ENCODE measurements at regions of chrX and their contacts with region 1.

Region 1: GRCh38 chrX:109890895-109891502 is 111.9 kb upstream of the TMEM164 start:
- DNase-seq: peak; percentile 70
- ATAC-seq: peak; percentile 96
- H3K4me3 Mint-ChIP-seq: no peak overlapping the region
- H3K27ac Mint-ChIP-seq: no peak overlapping the region
- H3K4me1 Mint-ChIP-seq: no peaks in the 10 kb centered on the region
- H3K27me3 Mint-ChIP-seq: peaks cover 2% of the 10 kb centered on the region; the same call in 1 of the 2 replicates
- CTCF ChIP-seq: peak; percentile 58

Region 2: DNA sequence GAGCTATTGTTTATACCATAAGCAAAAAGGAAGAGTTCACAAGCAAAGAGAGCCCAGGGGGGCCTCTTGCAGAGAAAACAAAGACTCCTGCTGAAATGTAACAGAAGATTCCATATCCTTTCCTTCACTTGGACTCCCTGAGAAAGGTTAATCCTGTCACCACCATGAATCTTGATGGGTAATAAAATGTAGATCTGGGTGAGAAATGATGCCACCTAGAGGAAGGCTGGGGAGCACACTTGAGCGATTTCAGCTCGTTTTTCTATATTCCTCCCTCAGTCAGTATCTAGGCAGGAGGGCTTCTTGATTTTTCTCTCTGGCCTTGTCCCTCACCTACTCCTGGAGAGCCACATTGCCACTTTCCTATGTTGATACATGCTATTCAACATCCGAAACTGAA is 255.8 kb before region 1 on chrX:
- CTCF ChIA-PET with region 1: interaction called, 19 read pairs
- POLR2A ChIA-PET with region 1: no interaction called
- DNase-seq: peak; percentile 9
- ATAC-seq: peak; percentile 70
- H3K4me3 Mint-ChIP-seq: no peak overlapping the region
- H3K27ac Mint-ChIP-seq: no peak overlapping the region
- H3K4me1 Mint-ChIP-seq: no peaks in the 10 kb centered on the region; the same call in 1 of the 2 replicates
- H3K27me3 Mint-ChIP-seq: no peaks in the 10 kb centered on the region
- CTCF ChIP-seq: no peak

Region 3: GRCh38 chrX:109709129-109709631 is 181.8 kb before region 1 on chrX:
- CTCF ChIA-PET with region 1: interaction called, 53 read pairs
- POLR2A ChIA-PET with region 1: no interaction called
- DNase-seq: no peak
- ATAC-seq: no peak
- H3K4me3 Mint-ChIP-seq: no peak overlapping the region
- H3K27ac Mint-ChIP-seq: peak overlapping the region; percentile 36; the same call in 1 of the 2 replicates
- H3K4me1 Mint-ChIP-seq: peaks cover 16% of the 10 kb centered on the region
- H3K27me3 Mint-ChIP-seq: no peaks in the 10 kb centered on the region
- CTCF ChIP-seq: no peak

Region 4: DNA sequence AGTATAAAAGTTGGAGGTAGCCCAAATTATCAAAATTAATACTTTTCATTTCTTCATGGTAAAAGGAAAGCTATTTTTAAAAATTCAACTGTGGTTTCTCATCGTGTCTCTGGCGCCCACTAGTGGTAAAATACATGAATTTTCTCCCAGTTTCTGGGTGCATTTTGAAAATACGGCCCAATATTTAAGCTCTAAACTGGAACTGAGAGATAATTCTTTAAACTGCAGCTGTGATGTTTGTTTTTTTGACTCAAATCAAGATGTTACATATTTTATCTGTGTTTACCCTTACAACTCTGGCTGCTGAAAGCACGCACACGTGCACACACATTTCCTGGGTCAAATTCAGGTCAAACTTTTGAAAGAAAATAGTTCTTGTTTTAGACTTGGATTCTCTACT is 34.0 kb before region 1 on chrX:
- CTCF ChIA-PET with region 1: interaction called, 15 read pairs
- POLR2A ChIA-PET with region 1: no interaction called
- DNase-seq: no peak
- ATAC-seq: no peak
- H3K4me3 Mint-ChIP-seq: no peak overlapping the region
- H3K27ac Mint-ChIP-seq: no peak overlapping the region
- H3K4me1 Mint-ChIP-seq: peaks cover 18% of the 10 kb centered on the region
- H3K27me3 Mint-ChIP-seq: no peaks in the 10 kb centered on the region
- CTCF ChIP-seq: peak; percentile 27; the same call in 1 of the 2 replicates

Region 5: GRCh38 chrX:109911046-109911445 is 20.0 kb after region 1 on chrX:
- CTCF ChIA-PET with region 1: interaction called, 12 read pairs
- POLR2A ChIA-PET with region 1: no interaction called
- DNase-seq: no peak
- ATAC-seq: no peak
- H3K4me3 Mint-ChIP-seq: no peak overlapping the region
- H3K27ac Mint-ChIP-seq: no peak overlapping the region
- H3K4me1 Mint-ChIP-seq: no peaks in the 10 kb centered on the region
- H3K27me3 Mint-ChIP-seq: no peaks in the 10 kb centered on the region; the same call in 1 of the 2 replicates
- CTCF ChIP-seq: no peak

Region 6: DNA sequence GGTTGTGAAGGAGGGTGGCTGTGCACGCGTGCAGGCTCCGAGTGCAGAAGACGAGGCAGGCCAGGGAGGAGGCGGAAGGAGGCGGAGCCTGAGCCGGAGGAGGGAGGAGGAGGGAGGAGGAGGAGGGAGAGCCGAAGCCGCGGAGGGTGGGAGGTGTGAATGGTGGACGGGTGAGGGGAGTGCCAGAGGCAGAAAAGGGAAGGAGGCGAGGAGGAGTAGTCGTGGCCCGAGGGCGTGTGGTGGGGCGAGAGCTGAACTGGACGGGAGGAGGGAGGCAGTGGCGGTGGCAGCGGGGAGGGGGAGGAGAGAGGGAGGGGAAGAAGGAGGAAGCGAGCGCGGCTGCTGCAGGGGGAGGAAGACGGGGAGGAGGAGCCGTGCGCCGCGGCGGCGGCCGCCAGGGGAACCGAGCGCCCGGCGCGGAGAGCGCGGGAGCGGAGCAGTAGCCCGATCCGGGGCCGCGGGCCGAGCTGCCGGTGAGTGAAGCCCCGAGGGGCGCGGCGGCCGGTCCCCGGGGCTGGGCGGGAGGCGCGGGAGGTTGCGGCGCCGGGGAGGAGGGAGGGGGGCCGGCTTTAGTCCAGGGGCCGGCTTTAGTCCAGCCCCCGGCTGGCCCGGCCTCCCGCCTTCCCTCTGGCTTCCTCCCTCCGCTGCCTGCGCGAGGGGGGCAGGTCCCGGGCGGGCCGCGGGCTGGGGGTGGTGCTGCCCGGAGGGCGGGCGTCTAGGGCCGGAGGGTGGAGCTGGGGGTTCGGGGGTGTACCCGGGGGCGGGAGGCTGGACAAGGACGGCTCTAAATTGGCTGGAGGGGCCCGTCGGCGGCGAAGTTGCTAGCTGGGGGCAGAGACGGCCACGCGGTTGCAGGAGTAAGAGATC is 111.5 kb after region 1 on chrX and contains the start of gene TMEM164:
- CTCF ChIA-PET with region 1: no interaction called
- POLR2A ChIA-PET with region 1: no interaction called
- DNase-seq: peak; percentile 72
- ATAC-seq: peak; percentile 71
- H3K4me3 Mint-ChIP-seq: peak within 1 kb of the TSS; percentile 83
- H3K27ac Mint-ChIP-seq: no peak within 1 kb of the TSS; the same call in 1 of the 2 replicates
- H3K4me1 Mint-ChIP-seq: peaks cover 25% of the 10 kb centered on the region
- H3K27me3 Mint-ChIP-seq: no peaks in the 10 kb centered on the region; the same call in 1 of the 2 replicates
- CTCF ChIP-seq: no peak
- total RNA-seq, gene TMEM164: 16.0 to 22.3 TPM (median 19.2 TPM) in 3 replicates

Measured in WTC11 (cell line).